ENCODE measurements at regions of chr11 and their contacts with region 1.

Region 1: DNA sequence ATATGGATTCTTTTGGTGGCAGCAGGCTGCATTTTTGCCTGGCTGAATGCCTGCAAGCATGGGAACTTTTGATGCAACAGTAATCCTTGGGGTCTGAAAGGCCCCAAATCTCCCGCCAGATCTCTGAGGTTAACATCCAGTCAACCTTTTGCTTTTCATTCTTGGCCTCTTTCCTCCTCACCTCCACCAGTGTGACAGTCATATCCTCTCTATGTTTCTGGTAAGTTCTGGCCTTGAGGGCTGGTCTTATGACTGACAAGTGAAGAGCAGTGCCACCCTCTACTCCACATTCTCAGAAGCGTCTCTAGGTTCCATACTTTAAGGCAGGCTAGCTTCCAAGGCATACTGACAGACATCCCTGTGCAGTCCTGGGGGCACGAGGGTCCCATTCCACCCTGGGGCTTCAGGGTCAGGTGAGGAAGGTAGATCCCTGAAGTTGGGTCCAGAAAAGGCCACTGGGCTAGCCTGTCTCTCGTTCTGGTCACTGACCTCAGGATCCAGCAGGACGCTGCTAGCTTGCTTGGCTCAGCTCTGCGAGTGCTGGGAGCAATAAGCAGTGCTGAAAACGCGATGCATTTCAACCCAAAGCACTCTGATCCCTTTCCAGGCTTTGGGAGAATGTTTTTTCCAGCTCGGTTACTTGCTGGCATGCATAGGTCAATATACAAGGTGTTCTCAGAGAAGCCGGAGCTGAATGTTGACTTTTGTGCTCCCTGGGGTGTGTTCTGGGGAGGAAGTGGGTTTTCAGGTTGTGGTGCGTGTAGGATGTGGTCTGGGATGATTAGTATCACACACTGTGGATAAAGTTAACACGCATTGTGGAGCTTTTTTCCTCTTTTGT is 75.2 kb downstream of the PTPRJ start:
- DNase-seq: peak; percentile 91
- H3K4me3 Mint-ChIP-seq: peak overlapping the region; percentile 53
- H3K27ac Mint-ChIP-seq: peak overlapping the region; percentile 88
- H3K4me1 Mint-ChIP-seq: peaks cover 90% of the 10 kb centered on the region
- H3K27me3 Mint-ChIP-seq: no peaks in the 10 kb centered on the region

Region 2: DNA sequence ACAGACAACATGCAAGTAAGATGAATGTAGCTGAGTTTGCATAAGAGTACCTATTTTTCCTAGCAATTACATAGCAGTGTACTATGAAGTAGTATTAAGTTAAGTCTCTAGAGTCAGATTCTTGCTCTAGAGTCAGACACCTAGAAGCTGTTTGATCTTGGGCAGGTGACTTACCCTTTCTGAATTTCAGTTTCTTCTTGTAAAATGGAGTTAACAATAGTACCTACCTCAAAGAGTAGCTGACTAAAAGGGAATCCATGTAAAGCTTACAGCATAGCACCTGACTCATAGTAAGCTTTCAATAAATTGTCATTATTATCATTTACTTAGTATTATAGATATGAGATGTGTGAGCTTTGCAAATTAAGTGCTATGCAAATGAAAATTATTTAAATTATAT is 123.0 kb before region 1 on chr11:
- CTCF ChIA-PET with region 1: interaction called, 25 read pairs
- POLR2A ChIA-PET with region 1: interaction called, 24 read pairs
- DNase-seq: no peak
- H3K4me3 Mint-ChIP-seq: no peak overlapping the region
- H3K27ac Mint-ChIP-seq: no peak overlapping the region
- H3K4me1 Mint-ChIP-seq: peaks cover 29% of the 10 kb centered on the region
- H3K27me3 Mint-ChIP-seq: no peaks in the 10 kb centered on the region

Region 3: GRCh38 chr11:48001438-48002021 is 54.0 kb before region 1 on chr11:
- CTCF ChIA-PET with region 1: interaction called, 25 read pairs
- POLR2A ChIA-PET with region 1: interaction called, 519 read pairs
- DNase-seq: peak; percentile 93
- H3K4me3 Mint-ChIP-seq: peak overlapping the region; percentile 43
- H3K27ac Mint-ChIP-seq: peak overlapping the region; percentile 100
- H3K4me1 Mint-ChIP-seq: peaks cover 90% of the 10 kb centered on the region
- H3K27me3 Mint-ChIP-seq: no peaks in the 10 kb centered on the region

Region 4: GRCh38 chr11:48020092-48020755 is 35.3 kb before region 1 on chr11:
- CTCF ChIA-PET with region 1: interaction called, 17 read pairs
- POLR2A ChIA-PET with region 1: interaction called, 519 read pairs
- DNase-seq: peak; percentile 72
- H3K4me3 Mint-ChIP-seq: peak overlapping the region; percentile 62
- H3K27ac Mint-ChIP-seq: peak overlapping the region; percentile 92
- H3K4me1 Mint-ChIP-seq: peaks cover 85% of the 10 kb centered on the region
- H3K27me3 Mint-ChIP-seq: no peaks in the 10 kb centered on the region

Region 5: DNA sequence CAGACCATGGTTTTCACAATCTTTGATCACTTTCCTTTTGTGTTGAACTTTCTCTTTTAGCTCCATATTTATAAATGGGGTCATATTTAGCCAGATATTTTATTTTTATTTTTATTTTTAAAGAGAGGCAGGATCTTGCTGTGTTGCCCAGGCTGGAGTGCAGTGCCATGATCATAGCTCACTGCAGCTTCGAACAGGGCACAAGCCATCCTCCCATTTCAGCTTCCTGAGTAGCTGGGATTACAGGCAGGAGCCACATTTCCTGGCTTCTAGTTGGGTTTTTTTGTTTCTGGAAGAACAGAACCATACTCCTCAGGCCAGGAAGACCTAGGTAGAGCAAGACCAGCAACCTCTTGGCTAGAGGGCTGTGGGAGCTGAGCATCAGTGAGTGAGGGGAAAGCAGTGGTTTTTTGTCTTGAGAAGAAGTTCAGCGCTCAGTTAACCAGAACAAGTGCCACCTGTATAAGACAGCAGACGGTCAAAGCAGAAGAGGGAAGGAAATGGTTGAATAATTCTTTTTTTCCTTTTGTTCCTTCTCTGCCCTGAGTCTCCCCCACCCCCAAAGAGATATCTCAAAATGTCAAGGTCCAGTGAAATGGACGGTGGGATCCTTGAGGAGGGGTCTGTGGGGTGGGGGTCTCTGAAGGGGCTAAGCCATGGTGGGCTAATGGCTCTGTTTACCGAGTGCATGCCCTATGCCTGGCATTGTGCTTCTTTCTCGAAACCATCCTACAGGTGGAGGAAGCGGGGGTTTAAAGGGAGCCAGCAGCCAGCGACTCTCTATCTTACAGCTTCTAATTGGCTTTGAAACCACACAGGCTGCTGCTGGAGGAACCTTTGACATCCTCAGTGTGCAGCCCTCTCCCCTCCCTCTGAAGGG is 12.2 kb before region 1 on chr11:
- CTCF ChIA-PET with region 1: interaction called, 5 read pairs
- POLR2A ChIA-PET with region 1: interaction called, 34 read pairs
- DNase-seq: no peak
- H3K4me3 Mint-ChIP-seq: no peak overlapping the region
- H3K27ac Mint-ChIP-seq: no peak overlapping the region
- H3K4me1 Mint-ChIP-seq: peaks cover 64% of the 10 kb centered on the region
- H3K27me3 Mint-ChIP-seq: no peaks in the 10 kb centered on the region

Region 6: DNA sequence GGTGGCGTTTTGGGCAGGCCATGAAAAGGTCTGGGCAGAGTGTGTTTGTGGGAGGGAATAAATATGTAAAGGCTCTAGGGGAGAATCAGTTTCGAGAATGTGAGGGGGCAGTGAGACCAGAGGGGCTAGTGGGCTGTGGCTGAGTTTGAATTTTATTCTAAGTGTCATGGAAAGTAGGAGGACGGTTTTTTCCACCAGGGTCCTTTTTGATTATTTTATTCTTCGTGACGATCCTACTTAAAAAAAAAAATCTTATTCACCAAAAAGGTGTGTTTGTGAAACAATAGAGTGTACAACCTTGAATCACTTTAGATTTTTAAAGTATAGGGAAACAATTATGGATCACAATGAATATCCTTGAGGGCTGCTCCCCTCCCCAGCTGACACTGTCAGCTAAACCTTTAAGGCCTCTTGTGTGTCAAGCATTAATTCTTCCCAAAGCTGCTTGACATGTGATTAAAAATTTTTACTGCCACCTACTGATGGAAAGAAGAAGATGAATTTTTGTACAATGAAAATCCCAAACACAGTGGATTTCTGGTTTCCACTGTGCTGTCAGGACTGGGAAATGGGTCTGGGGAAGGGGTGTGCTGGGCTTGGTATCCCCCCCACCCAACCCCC is 53.6 kb after region 1 on chr11:
- CTCF ChIA-PET with region 1: interaction called, 32 read pairs
- POLR2A ChIA-PET with region 1: interaction called, 99 read pairs
- DNase-seq: no peak
- H3K4me3 Mint-ChIP-seq: peak overlapping the region; percentile 62
- H3K27ac Mint-ChIP-seq: peak overlapping the region; percentile 84
- H3K4me1 Mint-ChIP-seq: peaks cover 59% of the 10 kb centered on the region
- H3K27me3 Mint-ChIP-seq: no peaks in the 10 kb centered on the region

Region 7: DNA sequence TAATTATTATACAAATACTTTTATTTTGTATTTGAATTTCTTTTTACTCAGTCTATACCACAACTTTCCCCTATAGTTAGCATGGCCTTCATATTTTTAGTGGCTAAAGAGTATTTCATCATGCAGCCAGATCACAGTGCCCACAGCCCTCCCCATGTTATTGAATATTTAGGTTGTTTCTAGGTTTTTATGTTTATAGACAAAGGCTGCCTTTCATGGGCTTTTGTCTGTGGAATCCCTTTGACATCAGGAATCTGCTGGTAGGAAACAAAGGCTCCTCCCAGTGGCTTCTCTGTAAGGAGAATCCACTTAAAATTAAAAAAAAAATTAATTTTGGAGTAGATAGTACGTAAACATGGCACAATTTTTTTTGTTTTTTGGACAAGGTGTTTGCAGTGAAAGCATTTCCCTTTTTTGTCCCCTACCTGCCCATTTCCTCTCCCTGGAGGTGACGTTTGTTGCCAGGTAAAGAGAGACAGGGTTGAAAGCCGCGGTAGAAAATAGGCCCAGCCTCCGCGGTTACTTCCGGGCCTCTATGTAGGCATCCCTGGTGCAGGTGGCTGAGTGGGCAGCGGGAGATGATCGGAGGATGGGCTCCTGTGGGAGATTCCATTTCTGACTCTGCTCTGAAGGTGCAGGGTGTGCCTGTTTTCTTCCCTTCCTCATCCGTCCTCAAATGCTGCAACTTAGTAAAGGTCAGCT is 78.9 kb after region 1 on chr11:
- CTCF ChIA-PET with region 1: no interaction called
- POLR2A ChIA-PET with region 1: no interaction called
- DNase-seq: no peak
- H3K4me3 Mint-ChIP-seq: no peak overlapping the region
- H3K27ac Mint-ChIP-seq: no peak overlapping the region
- H3K4me1 Mint-ChIP-seq: peaks cover 10% of the 10 kb centered on the region
- H3K27me3 Mint-ChIP-seq: no peaks in the 10 kb centered on the region

Measured in activated CD4-positive, alpha-beta memory T cell treated with anti-CD3 and anti-CD28 coated beads, Interleukin-2, amount 10 ng/mL, durations not matched to agents 7 days and 5 days (primary cell).